ENCODE measurements at regions of chr20 and their contacts with region 1.

Region 1: GRCh38 chr20:51460569-51461250 is 81.8 kb downstream of the NFATC2 start:
- DNase-seq: no peak
- H3K4me3 ChIP-seq: no peak overlapping the region
- H3K27ac ChIP-seq: no peak overlapping the region
- H3K4me1 ChIP-seq: peaks cover 39% of the 10 kb centered on the region
- H3K27me3 ChIP-seq: no peaks in the 10 kb centered on the region
- CTCF ChIP-seq: no peak
- POLR2A ChIP-seq: no peak

Region 2: GRCh38 chr20:51569827-51570738 is 109.4 kb after region 1 on chr20:
- intact Hi-C with region 1: loop called (anchors 10 kb)
- DNase-seq: no peak
- H3K4me3 ChIP-seq: peak overlapping the region in 1 of 2 donors; percentile 14
- H3K27ac ChIP-seq: no peak overlapping the region
- H3K4me1 ChIP-seq: peaks cover 13% of the 10 kb centered on the region
- H3K27me3 ChIP-seq: no peaks in the 10 kb centered on the region
- CTCF ChIP-seq: no peak
- POLR2A ChIP-seq: no peak